ENCODE measurements at regions of chr20 and their contacts with region 1.

Region 1: DNA sequence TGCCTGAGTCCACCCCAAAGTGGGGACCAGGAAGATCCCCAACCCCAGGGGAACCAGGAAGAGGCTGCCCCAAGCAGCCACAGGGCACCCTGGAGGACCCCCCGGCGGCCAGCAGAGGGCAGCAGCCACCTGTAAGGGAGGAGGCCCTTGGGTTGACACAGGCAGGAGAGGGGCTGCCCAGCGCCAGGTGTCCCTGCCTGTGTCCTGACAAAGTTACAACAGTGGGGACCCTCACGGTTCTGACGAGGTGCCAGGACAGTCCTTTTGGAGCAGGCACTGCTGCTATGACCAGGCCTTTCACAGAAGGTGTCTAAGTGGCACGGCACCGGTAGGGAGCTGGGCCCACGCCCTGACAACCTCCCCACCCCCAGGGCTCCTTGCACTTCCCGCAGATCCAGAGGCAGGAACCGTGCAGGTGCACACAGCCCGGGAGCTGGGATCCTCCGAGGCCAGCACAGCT is 176.7 kb downstream of the BMP7 start:
- DNase-seq: peak; percentile 86
- CTCF ChIP-seq: peak; percentile 80

Region 2: DNA sequence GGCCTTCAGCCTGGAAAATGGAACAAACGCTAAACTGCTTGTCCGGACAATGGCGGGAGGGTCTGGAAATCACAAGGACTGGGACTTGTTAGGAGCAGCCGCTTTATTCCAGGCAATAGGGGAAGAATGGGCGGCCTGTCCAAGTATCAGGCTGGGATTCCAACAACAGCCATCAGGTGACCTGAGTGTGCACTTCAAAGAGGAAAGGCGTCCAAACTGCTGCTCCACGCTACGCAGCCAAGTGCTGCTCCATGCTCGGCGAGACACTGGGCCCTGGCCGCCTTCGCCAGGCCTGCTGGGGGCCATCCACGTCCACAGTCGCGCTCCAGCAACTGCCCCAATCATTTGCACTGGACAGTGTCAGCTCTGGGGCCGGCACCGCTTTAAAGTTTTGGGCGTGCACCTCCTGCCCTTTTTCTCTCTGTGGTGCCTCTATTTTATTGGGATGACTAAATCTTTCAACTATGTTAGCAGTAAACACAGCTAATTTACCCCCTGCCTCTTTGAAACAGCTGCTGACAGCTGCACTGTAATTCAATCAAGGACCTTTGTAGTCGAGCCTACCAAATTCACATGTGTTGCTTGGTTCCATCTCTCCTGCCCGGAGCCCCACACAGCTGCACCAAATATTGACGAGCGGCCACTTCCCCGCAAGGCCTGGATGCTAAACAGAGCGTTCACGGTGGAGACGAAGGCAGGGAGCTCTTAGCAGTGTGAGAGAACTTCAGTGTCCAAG is 78.4 kb after region 1 on chr20:
- in situ Hi-C with region 1: no loop called
- DNase-seq: no peak
- CTCF ChIP-seq: no peak

Region 3: DNA sequence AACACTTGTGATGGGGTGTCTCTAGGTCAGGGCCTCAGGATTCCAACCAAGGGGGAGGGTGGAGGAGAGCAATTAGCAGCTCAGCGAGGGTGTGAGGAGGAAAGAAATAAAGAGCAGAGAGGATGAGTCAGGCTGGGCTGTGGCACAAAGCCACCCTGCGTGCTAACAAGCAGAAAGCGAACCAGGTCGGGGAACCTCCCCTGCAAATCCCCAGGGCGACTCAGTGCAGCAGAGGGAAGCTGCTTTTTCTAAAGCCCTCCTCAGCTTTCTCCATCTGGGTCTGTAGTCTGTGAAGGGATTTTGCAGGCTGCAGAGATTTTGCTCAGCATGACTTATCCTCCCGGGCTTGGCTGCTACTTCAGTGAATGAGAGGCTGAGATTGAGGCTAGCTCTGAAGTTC is 233.3 kb after region 1 on chr20:
- in situ Hi-C with region 1: loop called (anchors 10 kb)
- DNase-seq: no peak
- CTCF ChIP-seq: no peak

Region 4: DNA sequence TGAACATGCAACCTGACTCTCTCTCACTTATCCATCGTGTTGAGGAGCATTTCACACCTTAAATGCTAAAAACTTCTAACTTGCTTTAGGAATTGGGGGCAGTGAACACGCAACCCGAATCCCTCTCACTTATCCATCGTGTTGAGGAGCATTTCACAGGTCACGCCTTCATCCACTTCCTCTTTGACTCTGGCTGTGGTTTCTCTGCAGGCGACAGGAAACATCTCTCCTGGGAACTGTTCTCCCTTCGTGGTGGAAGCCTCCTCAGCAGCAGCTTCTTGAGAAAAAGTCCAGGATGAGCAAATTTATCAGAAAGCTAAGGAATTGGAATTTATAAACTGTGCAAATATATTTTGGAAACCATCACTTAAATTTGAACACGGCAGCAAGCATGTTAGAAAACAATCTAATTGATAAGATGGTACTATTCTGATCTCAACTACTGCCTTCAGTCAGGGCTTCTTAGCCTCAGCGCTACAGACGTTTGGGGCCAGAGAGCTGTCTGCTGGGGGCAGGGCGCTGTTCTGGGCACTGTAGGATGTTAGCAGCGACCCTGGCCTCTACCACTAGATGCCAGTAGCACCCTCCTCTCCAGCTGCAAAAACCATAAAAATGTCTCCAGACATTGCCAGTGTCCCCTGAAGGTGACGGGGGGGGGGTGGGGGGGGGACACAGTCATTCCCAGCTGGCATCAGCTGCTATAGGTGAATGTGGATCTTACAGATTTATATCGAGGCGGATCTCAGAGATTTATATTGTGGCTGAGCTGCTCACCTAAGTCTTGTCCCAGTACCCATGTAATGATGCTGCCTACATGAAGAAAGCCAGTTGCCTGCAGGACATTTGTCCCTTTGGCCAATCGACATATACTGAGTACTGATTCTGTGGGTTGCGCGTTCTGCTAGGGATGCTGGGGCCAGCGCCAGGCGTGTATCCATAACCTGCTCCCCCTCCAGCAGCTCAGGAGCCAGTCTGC is 409.0 kb after region 1 on chr20:
- in situ Hi-C with region 1: loop called (anchors 25 kb)
- DNase-seq: no peak
- CTCF ChIP-seq: peak; percentile 37